Activated B cell treated with CpG ODN at 0.5 μM for 24 hours (primary cell): ENCODE measurements at regions of chr2 and their contacts with region 1.

Region 1: DNA sequence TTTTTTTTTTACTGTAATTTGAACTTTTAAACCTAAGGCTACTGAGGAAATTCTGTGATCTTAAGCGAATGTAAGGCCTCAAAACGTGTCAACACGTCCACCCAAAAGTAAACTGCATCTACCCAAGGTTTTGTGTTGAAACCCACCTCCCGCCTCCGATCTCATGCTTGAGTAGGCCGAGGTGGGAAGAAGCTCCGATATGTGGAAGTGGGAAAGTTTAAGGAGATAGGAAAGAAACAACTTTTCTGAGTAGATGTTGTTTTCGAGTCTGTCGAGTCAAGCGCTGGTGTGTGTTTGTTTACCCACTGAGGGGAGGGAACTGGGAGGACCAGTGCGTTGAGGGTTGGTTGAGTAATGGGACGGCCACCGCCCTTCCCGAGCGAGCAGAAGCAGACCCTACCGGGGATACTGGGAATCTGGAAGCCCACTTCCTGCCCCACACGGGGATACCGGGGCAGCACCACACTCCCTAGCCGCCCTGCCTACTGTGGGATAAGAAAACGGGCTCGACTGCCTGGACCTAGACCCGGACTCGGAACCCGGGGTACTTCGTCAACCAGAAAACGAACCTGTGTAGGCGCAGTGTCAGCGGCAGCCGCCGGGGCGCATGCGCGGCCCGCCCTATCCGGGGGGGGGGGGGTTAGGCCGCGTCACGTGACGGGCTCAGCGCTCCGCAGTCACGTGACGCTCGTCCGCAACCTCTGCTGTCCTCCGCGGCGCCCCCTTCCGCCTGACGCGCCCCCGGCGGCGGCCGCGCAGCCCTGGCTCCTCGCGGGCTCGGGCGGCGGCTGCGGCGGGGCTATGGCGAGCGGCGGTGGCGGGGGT is at the start of gene RETREG2:
- DNase-seq: peak; percentile 78
- ATAC-seq: peak; percentile 45
- H3K4me3 Mint-ChIP-seq: peak within 1 kb of the TSS; percentile 96
- H3K27ac Mint-ChIP-seq: peak within 1 kb of the TSS; percentile 99
- H3K4me1 Mint-ChIP-seq: peaks cover 40% of the 10 kb centered on the region
- H3K27me3 Mint-ChIP-seq: no peaks in the 10 kb centered on the region
- CTCF ChIP-seq: no peak
- total RNA-seq, gene RETREG2: 60.5 and 78.6 TPM in 2 replicates

Region 2: DNA sequence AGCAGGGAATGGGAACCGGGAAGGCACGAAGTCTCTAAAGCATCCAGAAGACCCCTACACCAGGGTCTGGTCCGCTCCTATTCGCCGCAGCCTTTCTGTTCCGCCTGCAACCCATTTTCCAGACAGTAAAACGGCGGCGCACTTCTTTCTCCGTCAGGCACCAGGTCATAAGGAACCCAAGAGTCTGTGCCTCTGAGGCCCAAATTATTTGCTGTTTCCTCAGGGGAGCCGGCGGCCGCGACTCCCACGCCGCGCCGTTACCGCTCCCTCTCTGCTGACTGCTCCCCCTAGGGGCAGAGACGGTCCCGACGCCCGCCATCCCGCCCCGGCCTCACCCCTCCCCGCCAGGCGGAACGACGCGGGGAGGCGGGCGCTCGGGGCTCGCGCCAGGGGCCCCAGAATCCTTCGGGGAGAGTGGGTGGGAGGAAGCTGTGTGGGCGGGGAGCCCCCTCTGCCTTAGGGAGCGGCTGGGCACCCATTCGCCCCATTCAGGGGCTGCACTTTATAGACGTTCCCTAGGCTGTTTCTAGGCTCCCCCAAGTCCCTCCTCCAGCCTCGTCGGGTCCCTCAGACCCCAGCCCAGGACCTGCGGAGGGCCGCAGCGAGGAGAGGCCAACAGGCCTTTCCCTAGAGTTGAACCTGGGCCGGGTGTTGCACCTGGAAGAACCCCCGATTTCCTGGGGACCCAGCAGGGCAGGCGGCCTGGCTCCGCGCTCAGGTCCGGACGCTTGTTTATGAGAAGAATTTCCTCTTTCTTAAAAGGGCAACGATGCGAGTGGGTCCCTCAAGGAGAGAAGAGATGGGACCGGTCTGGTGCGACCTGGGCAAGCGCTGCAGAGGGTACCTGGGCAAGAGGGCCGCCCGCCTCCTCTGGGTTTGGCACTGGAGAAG is 781.7 kb before region 1 on chr2:
- CTCF ChIA-PET with region 1: no interaction called
- POLR2A ChIA-PET with region 1: interaction called, 4 read pairs
- intact Hi-C with region 1: loop called (anchors 5 kb)
- DNase-seq: peak; percentile 88
- ATAC-seq: peak; percentile 70
- H3K4me3 Mint-ChIP-seq: peak overlapping the region; percentile 92
- H3K27ac Mint-ChIP-seq: peak overlapping the region; percentile 96
- H3K4me1 Mint-ChIP-seq: peaks cover 51% of the 10 kb centered on the region
- H3K27me3 Mint-ChIP-seq: no peaks in the 10 kb centered on the region
- CTCF ChIP-seq: peak; percentile 44

Region 3: GRCh38 chr2:218876562-218877219 is 301.1 kb before region 1 on chr2:
- CTCF ChIA-PET with region 1: no interaction called
- POLR2A ChIA-PET with region 1: interaction called, 4 read pairs
- intact Hi-C with region 1: loop called (anchors 2 kb)
- DNase-seq: peak; percentile 58
- ATAC-seq: no peak
- H3K4me3 Mint-ChIP-seq: no peak overlapping the region
- H3K27ac Mint-ChIP-seq: no peak overlapping the region
- H3K4me1 Mint-ChIP-seq: peaks cover 55% of the 10 kb centered on the region
- H3K27me3 Mint-ChIP-seq: peaks cover 19% of the 10 kb centered on the region
- CTCF ChIP-seq: peak; percentile 65

Region 4: GRCh38 chr2:219206442-219207253 is 28.9 kb after region 1 on chr2 and contains the start of gene ZFAND2B:
- CTCF ChIA-PET with region 1: interaction called, 14 read pairs
- POLR2A ChIA-PET with region 1: interaction called, 98 read pairs
- intact Hi-C with region 1: loop called (anchors 1 kb)
- DNase-seq: peak; percentile 99
- ATAC-seq: peak; percentile 93
- H3K4me3 Mint-ChIP-seq: peak within 1 kb of the TSS; percentile 88
- H3K27ac Mint-ChIP-seq: peak within 1 kb of the TSS; percentile 95
- H3K4me1 Mint-ChIP-seq: peaks cover 26% of the 10 kb centered on the region
- H3K27me3 Mint-ChIP-seq: no peaks in the 10 kb centered on the region
- CTCF ChIP-seq: no peak
- total RNA-seq, gene ZFAND2B: 39.9 and 47.2 TPM in 2 replicates

Region 5: GRCh38 chr2:219253753-219254590 is 76.2 kb after region 1 on chr2 and contains the start of gene TUBA4A:
- CTCF ChIA-PET with region 1: interaction called, 7 read pairs
- POLR2A ChIA-PET with region 1: interaction called, 85 read pairs
- intact Hi-C with region 1: loop called (anchors 1 kb)
- DNase-seq: peak; percentile 90
- ATAC-seq: peak; percentile 69
- H3K4me3 Mint-ChIP-seq: peak within 1 kb of the TSS; percentile 82
- H3K27ac Mint-ChIP-seq: peak within 1 kb of the TSS; percentile 98
- H3K4me1 Mint-ChIP-seq: peaks cover 53% of the 10 kb centered on the region
- H3K27me3 Mint-ChIP-seq: no peaks in the 10 kb centered on the region
- CTCF ChIP-seq: no peak
- total RNA-seq, gene TUBA4A: 184 and 192 TPM in 2 replicates

Region 6: DNA sequence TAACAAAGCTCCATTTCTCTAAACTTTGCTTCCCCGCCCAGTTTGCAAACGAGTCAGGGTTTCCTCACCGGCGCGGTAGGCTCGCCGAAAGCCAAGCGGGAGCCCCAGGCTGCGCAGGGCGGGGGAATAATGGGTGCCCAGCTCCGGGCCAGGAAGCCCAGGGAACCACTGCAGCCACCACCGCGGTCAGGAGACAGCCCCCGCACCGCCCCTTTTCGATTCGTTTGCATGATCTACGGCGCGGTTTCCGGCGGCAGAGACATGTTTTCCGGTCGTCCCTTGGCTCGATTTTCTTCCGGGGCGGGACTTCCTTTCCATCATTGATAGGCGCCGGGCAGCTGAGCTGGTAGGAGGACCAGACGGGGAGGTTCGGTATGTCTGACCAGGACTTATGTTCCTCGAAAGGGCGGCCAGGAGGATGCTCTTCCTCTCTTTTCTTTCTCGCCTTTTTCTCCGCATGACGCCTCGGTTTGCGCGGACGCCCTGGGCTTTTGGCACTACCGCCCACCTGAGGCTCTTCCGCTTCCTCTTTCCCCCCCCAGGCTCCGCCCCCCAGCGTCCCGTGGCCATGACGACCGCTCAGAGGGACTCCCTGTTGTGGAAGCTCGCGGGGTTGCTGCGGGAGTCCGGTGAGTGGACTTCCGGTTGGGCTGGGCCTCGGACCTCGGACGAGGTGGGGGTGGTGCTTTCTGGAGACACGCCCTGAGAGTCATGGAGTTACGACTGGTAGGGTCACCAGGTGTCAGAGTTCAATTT is 420.0 kb after region 1 on chr2 and contains the start of gene STK11IP:
- CTCF ChIA-PET with region 1: no interaction called
- POLR2A ChIA-PET with region 1: no interaction called
- intact Hi-C with region 1: loop called (anchors 5 kb)
- DNase-seq: peak; percentile 83
- ATAC-seq: peak; percentile 91
- H3K4me3 Mint-ChIP-seq: peak within 1 kb of the TSS; percentile 96
- H3K27ac Mint-ChIP-seq: peak within 1 kb of the TSS; percentile 97
- H3K4me1 Mint-ChIP-seq: peaks cover 23% of the 10 kb centered on the region
- H3K27me3 Mint-ChIP-seq: peaks cover 13% of the 10 kb centered on the region
- CTCF ChIP-seq: no peak
- total RNA-seq, gene STK11IP: 43.3 and 53.6 TPM in 2 replicates